Left ventricle myocardium superior (tissue), 1 donor: ENCODE measurements at regions of chr1 and their contacts with region 1.

Region 1: DNA sequence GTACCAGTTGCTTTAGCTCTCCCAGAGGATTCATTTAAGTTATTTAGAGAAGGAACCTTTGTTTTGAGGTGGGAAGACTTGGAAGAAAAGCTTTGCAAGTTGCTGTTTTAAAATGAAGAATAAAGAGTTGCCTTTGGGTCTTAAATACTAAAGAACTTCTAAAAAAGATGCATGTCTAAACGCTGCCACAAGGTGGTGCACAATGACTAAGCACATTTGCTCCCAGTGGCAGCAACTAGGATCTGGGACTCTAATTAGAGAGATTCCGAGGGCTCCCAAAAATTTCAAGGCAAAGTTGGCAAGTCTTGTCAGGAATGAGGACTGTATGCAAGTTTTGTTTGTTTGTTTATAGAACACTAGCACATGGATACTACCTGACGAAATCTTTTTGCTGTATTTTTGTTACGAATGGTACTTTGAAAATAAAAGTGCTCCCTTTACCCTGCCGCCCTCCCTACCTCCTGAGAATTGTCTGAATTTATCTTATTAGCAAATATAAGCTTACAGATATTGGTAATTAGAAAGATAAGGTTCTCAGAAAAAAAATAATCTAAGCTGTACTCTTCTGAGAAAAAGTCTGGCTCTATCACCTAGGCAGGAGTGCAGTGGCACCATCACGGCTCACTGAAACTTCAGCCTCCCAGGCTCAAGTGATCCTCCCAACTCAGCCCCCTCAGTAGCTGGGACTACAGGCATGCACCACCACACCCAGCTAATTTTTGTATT is 121.8 kb downstream of the HFM1 start:
- DNase-seq: peak; percentile 34
- ATAC-seq: peak; percentile 78

Region 2: GRCh38 chr1:90325168-90325567 is 957.7 kb before region 1 on chr1:
- intact Hi-C with region 1: no loop called
- DNase-seq: no peak
- ATAC-seq: no peak

Region 3: DNA sequence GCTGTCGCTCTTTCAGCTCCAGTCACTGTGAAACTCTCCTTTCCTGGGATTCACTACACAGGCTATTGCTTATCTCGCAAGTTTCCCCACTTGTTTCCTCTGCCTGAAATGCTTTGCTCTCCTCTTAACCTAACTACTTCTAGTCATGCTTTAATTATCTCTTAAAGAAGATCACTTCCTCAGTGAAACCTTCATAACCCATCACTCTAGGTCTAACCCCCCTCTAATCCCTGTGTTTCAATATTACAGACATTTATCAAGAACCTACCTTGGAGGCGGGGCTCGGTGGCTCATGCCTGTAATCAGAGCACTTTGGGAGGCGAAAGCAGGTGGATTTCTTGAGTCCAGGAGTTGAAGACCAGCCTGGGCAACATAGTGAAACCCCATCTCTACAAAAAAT is 244.3 kb before region 1 on chr1:
- intact Hi-C with region 1: no loop called
- DNase-seq: no peak
- ATAC-seq: no peak

Region 4: DNA sequence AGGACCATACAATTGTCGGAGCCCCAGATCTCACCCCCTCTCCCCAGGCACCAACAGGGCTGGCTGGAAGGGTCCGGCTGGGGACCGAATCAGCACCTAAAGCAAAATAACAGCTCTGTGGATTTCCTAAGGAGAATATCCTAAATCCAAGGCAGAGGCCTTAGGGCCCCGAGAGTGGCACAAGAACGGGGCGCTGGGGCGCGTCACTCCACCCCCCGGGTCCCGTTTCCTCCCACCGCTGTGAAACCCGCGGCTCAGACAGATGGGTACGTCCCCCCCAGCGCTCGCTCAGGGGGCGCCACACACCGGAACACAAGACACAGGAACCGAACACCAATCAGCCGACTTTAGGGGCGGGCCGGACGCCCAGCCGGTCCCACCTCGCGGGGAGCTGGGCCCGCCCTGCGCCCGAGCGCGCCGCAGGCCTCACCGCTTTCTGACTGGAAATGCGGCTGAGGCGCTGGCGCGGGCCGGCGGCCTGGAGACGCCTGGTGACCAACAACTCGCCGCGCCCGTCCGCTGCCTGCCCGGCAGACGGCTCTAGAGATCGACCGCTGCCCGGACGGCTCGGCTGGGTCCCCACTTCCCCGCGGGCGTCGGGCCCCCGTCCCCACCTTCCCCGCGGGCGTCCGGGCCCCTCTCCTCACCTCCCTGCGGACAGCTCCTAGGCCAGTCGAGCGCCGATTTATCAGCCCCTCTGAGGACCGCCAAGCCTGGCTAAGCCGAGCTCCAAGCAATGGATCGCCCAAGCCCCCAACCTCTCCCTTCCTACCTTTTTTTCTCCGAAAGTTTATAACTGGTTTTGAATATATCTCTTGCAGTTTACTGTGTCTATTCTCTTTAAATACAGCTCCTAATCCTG is 121.5 kb after region 1 on chr1 and contains the start of gene HFM1:
- intact Hi-C with region 1: loop called (anchors 5 kb)
- DNase-seq: peak; percentile 93
- ATAC-seq: peak; percentile 100
- total RNA-seq, gene HFM1: 1.3 TPM

Region 5: DNA sequence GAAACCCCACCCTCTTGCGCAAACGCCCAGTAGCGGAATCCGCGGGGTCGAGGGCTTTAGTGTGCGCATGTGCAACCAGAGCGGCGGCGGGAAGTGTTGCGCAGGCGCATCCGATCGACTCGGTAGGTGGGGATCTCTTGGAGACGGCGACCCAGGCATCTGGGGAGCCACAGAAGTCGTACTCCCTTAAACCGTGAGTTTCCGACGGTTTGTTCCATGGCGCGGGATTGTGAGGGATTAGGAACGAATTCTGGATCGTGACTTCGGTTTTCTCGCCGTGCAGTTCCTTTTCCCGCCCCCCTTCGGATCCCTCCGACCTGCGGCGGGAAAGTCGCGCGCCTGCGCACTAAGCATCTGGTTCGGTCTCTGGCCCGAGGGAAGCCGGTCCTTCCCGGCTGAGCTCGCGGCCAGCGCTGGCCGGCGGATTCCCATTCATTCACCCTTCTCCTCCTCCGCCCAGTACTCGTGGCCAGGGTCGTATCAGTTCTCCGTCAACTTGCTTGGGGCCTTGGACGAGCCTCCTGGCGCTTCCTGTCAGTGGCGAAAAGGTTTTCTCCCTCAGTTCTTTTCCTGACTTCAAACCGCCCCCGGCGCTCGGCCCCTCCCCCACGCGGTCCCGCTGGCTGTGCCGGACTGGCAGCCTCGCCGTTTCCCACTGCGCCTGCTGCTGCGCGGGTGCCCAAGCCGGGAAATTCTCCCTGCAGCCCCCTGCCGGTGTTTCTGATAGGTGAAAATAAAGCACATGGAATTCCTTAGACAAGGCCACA is 218.1 kb after region 1 on chr1 and contains the start of gene CDC7:
- intact Hi-C with region 1: loop called (anchors 5 kb)
- DNase-seq: peak; percentile 96
- ATAC-seq: peak; percentile 97
- total RNA-seq, gene CDC7: 1.2 TPM